ENCODE measurements at regions of chr6 and their contacts with region 1.

Region 1: GRCh38 chr6:127749095-127749494 is 151.8 kb downstream of the THEMIS start:
- DNase-seq: no peak
- H3K4me3 ChIP-seq: no peak overlapping the region
- H3K27ac ChIP-seq: no peak overlapping the region
- H3K4me1 ChIP-seq: no peaks in the 10 kb centered on the region
- H3K27me3 ChIP-seq: peaks cover 0 to 1% (median 0%) of the 10 kb centered on the region in 4 experiments; a peak in 1 of 7 replicates
- CTCF ChIP-seq: no peak
- EP300 ChIP-seq: no peak
- POLR2A ChIP-seq: no peak
- RAD21 ChIP-seq: no peak

Region 2: DNA sequence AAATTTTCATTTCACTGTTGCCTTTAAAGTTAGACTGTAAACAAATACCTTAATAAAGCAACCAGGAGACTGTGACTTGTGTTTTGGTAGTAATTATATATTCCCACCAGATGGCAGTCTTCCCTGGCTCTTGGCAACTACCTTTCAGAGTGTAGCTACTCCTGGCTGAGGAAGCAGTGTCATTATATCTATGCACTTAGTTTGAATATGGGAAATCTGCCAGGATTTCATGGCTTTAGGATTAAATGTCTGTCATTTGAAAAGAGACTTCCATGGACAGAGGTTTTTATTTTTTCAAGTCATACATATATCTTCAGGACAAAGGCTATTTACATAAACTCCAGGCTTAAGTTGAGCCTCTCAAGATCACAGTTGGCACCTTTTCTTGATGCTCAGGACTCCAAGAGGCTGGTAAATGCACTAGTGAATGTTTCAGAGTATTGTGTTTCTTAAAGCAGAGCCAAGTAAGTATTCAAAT is 12.0 kb before region 1 on chr6:
- CTCF ChIA-PET with region 1: interaction called, 10 read pairs
- POLR2A ChIA-PET with region 1: no interaction called
- DNase-seq: peak in 1 of 2 experiments; percentile 19
- H3K4me3 ChIP-seq: no peak overlapping the region
- H3K27ac ChIP-seq: no peak overlapping the region
- H3K4me1 ChIP-seq: no peaks in the 10 kb centered on the region
- H3K27me3 ChIP-seq: no peaks in the 10 kb centered on the region
- CTCF ChIP-seq: peak in 2 of 3 experiments; percentile 56 to 64; a peak in 3 of 4 replicates
- EP300 ChIP-seq: no peak
- POLR2A ChIP-seq: no peak
- RAD21 ChIP-seq: peak; percentile 92 to 93

Region 3: DNA sequence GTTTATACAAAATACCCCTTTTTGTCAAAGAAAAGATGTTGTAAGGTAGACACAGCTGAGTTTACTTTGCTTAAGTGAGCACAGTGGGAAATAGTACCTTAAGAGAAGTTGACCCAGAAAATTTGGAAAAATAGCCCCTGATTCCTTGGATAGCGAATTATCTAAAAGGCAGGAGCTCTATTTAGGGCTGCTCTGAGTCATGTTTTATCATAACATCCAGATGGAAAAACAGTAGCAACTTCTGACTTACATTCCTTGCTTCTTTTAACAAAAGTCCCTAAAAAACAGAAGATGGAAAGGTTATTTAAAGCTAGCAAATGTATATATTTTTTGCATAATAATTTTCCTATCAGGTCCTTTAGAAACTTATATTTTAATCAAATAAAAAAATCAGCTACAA is 92.7 kb after region 1 on chr6:
- CTCF ChIA-PET with region 1: no interaction called
- POLR2A ChIA-PET with region 1: no interaction called
- DNase-seq: no peak
- H3K4me3 ChIP-seq: no peak overlapping the region
- H3K27ac ChIP-seq: no peak overlapping the region
- H3K4me1 ChIP-seq: no peaks in the 10 kb centered on the region
- H3K27me3 ChIP-seq: no peaks in the 10 kb centered on the region
- CTCF ChIP-seq: no peak
- EP300 ChIP-seq: no peak
- POLR2A ChIP-seq: no peak
- RAD21 ChIP-seq: no peak